Adrenal gland (tissue), 19 donors: ENCODE measurements at regions of chr1 and their contacts with region 1.

Region 1: GRCh38 chr1:176843352-176844297 is 320.9 kb downstream of the ASTN1 start:
- DNase-seq: peak in 6 of 7 donors; percentile 20 to 43 (median 35)
- H3K4me3 ChIP-seq: no peak overlapping the region
- H3K27ac ChIP-seq: no peak overlapping the region
- H3K4me1 ChIP-seq: no peaks in the 10 kb centered on the region
- H3K27me3 ChIP-seq: no peaks in the 10 kb centered on the region
- CTCF ChIP-seq: peak; percentile 43 to 82 (median 75)
- POLR2A ChIP-seq: no peak

Region 2: DNA sequence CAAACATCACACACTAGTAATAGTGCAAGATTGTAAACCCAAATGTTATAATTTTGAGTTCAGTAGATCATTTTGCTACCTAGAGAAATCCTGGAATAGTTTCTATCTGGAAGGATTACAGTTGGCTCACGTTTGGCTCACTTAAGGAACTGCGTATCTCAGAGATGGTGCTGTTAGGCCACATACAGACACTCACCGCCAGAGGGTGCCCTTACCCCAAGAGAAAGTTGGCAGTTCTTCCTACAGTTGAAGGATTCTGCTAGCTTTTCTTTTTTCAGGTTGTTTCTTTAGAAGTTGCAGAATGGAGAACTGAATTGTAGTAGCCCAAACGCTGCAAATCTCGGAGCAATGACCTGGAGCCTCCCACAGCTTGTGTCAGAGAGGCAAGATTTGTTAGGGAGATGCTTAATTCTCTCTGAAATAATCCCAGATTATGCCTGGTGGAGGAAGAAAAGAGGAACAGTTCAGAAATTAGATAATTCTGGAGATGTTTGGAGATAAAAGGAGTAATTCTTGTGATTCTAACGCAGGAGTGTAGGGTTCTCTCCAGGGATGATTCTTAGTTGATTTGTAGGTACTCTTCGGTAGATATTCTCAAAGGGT is 468.6 kb before region 1 on chr1:
- intact Hi-C with region 1: loop called in 1 of 2 experiments (anchors 10 kb)
- DNase-seq: peak; percentile 66 to 93 (median 81)
- H3K4me3 ChIP-seq: no peak overlapping the region
- H3K27ac ChIP-seq: no peak overlapping the region
- H3K4me1 ChIP-seq: no peaks in the 10 kb centered on the region
- H3K27me3 ChIP-seq: no peaks in the 10 kb centered on the region
- CTCF ChIP-seq: peak; percentile 65 to 81 (median 74)
- POLR2A ChIP-seq: no peak

Region 3: DNA sequence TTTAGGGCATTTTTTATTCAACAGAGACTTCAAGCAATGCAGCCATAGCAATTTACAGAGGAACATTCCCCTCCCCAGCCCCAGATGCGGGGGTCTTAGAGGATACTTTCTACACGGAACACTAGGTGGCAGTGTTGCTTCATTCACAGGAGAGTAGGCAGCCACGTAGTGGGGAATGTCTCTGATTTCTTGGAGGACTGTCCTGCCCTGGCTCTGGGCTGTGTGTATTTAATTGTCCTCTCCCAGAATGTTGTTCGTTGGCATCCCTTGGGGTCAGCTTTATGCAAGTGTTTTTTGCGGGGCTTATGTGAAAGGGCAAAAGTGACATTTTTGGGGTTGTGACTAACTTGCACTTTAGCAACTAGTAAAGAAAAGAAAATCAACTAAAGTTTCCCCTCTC is 283.7 kb before region 1 on chr1:
- intact Hi-C with region 1: loop called (anchors 5 to 10 kb)
- DNase-seq: peak; percentile 33 to 70 (median 53)
- H3K4me3 ChIP-seq: no peak overlapping the region
- H3K27ac ChIP-seq: no peak overlapping the region
- H3K4me1 ChIP-seq: no peaks in the 10 kb centered on the region
- H3K27me3 ChIP-seq: peaks cover 3% of the 10 kb centered on the region
- CTCF ChIP-seq: peak; percentile 76 to 91 (median 84)
- POLR2A ChIP-seq: no peak

Region 4: GRCh38 chr1:176691251-176692228 is 152.1 kb before region 1 on chr1:
- intact Hi-C with region 1: loop called in 1 of 2 experiments (anchors 10 kb)
- DNase-seq: peak; percentile 21 to 72 (median 35)
- H3K4me3 ChIP-seq: no peak overlapping the region
- H3K27ac ChIP-seq: no peak overlapping the region
- H3K4me1 ChIP-seq: no peaks in the 10 kb centered on the region
- H3K27me3 ChIP-seq: no peaks in the 10 kb centered on the region
- CTCF ChIP-seq: peak; percentile 45 to 66 (median 64)
- POLR2A ChIP-seq: no peak

Region 5: GRCh38 chr1:176745945-176746344 is 97.7 kb before region 1 on chr1:
- intact Hi-C with region 1: no loop called
- DNase-seq: no peak
- H3K4me3 ChIP-seq: no peak overlapping the region
- H3K27ac ChIP-seq: no peak overlapping the region
- H3K4me1 ChIP-seq: no peaks in the 10 kb centered on the region
- H3K27me3 ChIP-seq: no peaks in the 10 kb centered on the region
- CTCF ChIP-seq: no peak
- POLR2A ChIP-seq: no peak